Posterior vena cava (tissue), 2 donors: ENCODE measurements at regions of chr9 and their contacts with region 1.

Region 1: GRCh38 chr9:72827950-72828731 is 124.7 kb downstream of the ALDH1A1 start:
- DNase-seq: no peak

Region 2: GRCh38 chr9:72271613-72272478 is 556.3 kb before region 1 on chr9:
- intact Hi-C with region 1: loop called in 1 of 2 experiments (anchors 10 kb)
- DNase-seq: no peak

Region 3: GRCh38 chr9:72292256-72292682 is 535.9 kb before region 1 on chr9:
- intact Hi-C with region 1: loop called in 1 of 2 experiments (anchors 10 kb)
- DNase-seq: no peak

Region 4: DNA sequence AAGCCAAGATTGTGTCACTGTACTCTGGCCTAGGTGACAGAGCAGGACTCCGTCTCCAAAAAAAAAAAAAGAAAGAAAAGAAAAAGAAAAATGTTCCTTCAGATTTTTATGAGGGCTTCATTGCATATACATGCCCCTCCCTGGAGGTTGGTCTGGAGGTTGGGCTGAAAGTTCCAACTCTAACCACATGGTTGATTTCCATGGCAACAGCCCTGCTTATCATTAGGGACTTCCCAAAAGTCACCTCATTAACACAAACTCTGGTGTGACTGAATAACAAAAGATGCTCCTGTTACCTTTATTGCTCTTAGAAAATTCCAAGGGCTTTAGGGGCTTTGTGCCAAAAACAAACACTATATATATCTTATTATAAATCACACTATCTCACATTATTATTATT is 192.9 kb before region 1 on chr9:
- intact Hi-C with region 1: loop called in 1 of 2 experiments (anchors 10 kb)
- DNase-seq: no peak